ENCODE measurements at regions of chr11 and their contacts with region 1.

Region 1: GRCh38 chr11:59550368-59550841 is 39.1 kb downstream of the OR4D9 start:
- DNase-seq: peak; percentile 82
- H3K4me3 Mint-ChIP-seq: peak overlapping the region; percentile 82
- H3K27ac Mint-ChIP-seq: peak overlapping the region; percentile 93
- H3K4me1 Mint-ChIP-seq: peaks cover 38% of the 10 kb centered on the region
- H3K27me3 Mint-ChIP-seq: peaks cover 19% of the 10 kb centered on the region

Region 2: GRCh38 chr11:57644748-57645688 is 1905.4 kb before region 1 on chr11:
- intact Hi-C with region 1: loop called (anchors 5 kb)
- DNase-seq: peak; percentile 77
- H3K4me3 Mint-ChIP-seq: no peak overlapping the region
- H3K27ac Mint-ChIP-seq: no peak overlapping the region
- H3K4me1 Mint-ChIP-seq: peaks cover 48% of the 10 kb centered on the region
- H3K27me3 Mint-ChIP-seq: peaks cover 39% of the 10 kb centered on the region

Region 3: DNA sequence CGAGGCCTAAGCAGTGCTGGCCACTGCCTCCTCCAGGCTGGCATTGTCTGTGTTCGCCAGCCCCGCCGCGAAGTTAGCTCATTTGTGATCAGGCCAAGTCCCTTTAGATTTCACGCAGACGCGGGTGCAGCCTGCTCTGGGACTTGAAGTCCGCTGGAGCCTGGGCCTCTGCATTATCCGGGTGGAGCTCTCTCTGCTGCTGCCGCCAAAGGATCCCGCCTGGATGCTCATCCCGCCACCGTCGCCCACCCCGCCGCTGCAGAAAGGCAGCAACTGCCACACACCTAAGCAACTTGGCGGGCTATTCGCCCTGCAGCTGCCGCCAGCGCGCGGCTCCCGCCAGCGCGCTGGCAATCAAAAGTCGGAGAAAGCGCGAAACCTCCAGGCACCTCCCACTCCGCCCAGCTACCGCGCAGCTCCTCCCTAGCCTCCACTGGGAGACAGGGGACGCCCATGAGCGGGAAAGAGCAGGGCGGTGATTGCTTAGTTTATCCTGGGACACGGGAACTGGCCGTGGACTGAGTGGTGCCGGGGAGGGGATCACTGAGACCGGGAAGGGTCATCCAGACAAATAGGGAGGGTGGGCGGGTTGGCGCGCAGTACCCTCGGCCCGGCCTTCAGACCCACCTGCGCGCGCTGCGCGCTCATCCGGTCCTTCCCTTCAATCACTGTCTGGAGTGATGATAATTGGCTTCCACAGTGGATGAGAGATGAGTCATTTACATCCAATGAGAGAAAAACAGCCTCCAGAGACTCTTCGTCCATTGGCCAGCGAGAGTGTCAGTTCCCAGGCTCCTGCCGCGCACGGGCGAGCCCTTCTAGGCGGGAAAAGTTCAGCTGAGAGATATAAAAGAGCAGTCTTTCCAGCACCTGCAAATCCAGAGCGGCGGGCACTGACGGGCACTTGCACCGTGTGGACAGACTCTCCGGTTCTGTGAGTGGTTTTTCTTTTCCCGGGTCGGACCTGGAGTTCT is 443.8 kb before region 1 on chr11 and contains the start of gene FAM111B:
- intact Hi-C with region 1: loop called (anchors 10 kb)
- DNase-seq: peak; percentile 73
- H3K4me3 Mint-ChIP-seq: peak within 1 kb of the TSS; percentile 93
- H3K27ac Mint-ChIP-seq: peak within 1 kb of the TSS; percentile 82
- H3K4me1 Mint-ChIP-seq: peaks cover 80% of the 10 kb centered on the region
- H3K27me3 Mint-ChIP-seq: no peaks in the 10 kb centered on the region
- total RNA-seq, gene FAM111B: 54.9 and 57.3 TPM in 2 replicates

Region 4: GRCh38 chr11:59142530-59143507 is 407.6 kb before region 1 on chr11 and contains the start of gene FAM111A:
- intact Hi-C with region 1: loop called (anchors 1 kb)
- DNase-seq: peak; percentile 88
- H3K4me3 Mint-ChIP-seq: peak within 1 kb of the TSS; percentile 91
- H3K27ac Mint-ChIP-seq: peak within 1 kb of the TSS; percentile 93
- H3K4me1 Mint-ChIP-seq: peaks cover 62% of the 10 kb centered on the region
- H3K27me3 Mint-ChIP-seq: no peaks in the 10 kb centered on the region
- total RNA-seq, gene FAM111A: 64.8 and 66.4 TPM in 2 replicates

Region 5: DNA sequence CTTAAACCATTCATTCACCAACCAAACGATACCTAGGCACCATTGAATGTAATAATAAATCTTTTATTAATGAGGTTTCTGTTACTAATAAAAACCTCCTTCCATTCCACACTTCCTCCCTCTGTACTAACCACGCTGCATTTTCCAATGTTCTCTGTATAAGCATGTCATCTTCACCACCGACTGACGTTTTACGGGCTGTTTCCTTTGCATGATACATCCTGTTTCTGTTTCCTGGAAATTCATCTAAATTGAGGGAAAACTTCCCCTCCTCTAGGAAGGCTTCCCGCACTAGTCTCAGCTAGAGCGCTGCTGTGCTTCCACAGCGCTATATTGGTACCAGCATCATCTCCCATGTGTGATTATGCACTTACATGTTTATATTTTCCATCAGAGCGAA is 75.2 kb before region 1 on chr11:
- intact Hi-C with region 1: no loop called
- DNase-seq: no peak
- H3K4me3 Mint-ChIP-seq: no peak overlapping the region
- H3K27ac Mint-ChIP-seq: no peak overlapping the region
- H3K4me1 Mint-ChIP-seq: no peaks in the 10 kb centered on the region
- H3K27me3 Mint-ChIP-seq: no peaks in the 10 kb centered on the region

Region 6: GRCh38 chr11:59560702-59561469 is 10.5 kb after region 1 on chr11:
- intact Hi-C with region 1: loop called (anchors 1 kb)
- DNase-seq: peak; percentile 54
- H3K4me3 Mint-ChIP-seq: peak overlapping the region; percentile 92
- H3K27ac Mint-ChIP-seq: peak overlapping the region; percentile 98
- H3K4me1 Mint-ChIP-seq: peaks cover 48% of the 10 kb centered on the region
- H3K27me3 Mint-ChIP-seq: peaks cover 10% of the 10 kb centered on the region

Region 7: GRCh38 chr11:59753650-59754493 is 203.5 kb after region 1 on chr11:
- intact Hi-C with region 1: no loop called
- DNase-seq: peak; percentile 77
- H3K4me3 Mint-ChIP-seq: peak overlapping the region; percentile 95
- H3K27ac Mint-ChIP-seq: peak overlapping the region; percentile 82
- H3K4me1 Mint-ChIP-seq: peaks cover 36% of the 10 kb centered on the region
- H3K27me3 Mint-ChIP-seq: peaks cover 7% of the 10 kb centered on the region

Region 8: DNA sequence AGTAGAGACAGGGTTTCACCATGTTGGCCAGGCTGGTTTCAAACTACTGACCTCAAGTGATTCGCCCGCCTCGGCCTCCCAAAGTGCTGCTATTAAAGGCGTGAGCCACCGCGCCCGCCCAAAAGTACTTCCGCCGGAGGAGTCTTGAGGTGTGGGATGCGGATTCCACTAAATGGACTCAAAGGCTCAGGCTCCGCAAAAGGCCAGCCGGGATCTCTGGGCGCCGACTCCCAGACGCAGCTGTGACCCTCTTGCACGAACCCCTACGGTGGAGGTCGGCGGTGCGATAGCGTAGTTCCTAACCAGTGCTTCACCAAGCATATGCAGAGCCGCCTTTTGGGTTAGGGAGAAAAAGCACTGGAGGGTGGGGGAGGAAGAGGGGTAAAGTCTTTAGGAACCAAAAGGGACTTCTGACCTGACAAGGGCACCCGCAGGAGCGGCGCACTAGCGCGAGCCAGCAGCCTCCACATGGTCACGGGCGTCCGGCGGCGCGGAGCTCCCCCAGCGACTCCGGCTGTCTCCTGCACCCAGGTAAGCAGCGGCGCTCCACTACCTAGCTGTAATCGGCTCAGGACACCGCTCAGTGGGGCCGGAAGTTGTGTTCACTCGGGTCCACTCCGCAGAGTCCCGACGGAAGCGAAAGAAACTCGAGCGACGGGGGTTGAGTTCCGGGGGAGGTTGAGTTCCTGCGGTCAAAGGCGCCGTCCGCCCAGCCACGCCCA is 259.9 kb after region 1 on chr11 and contains the start of gene MRPL16:
- intact Hi-C with region 1: loop called (anchors 2 kb)
- DNase-seq: peak; percentile 82
- H3K4me3 Mint-ChIP-seq: peak within 1 kb of the TSS; percentile 96
- H3K27ac Mint-ChIP-seq: peak within 1 kb of the TSS; percentile 91
- H3K4me1 Mint-ChIP-seq: peaks cover 28% of the 10 kb centered on the region
- H3K27me3 Mint-ChIP-seq: no peaks in the 10 kb centered on the region
- total RNA-seq, gene MRPL16: 88.3 and 93.9 TPM in 2 replicates

Measured in activated T-helper 1 cell treated with anti-CD3 and anti-CD28 coated beads, Interleukin-12 subunit alpha, Interleukin-12 subunit beta, Interleukin-2, Interleukin-4 antibody, amounts not matched to agents 30 ng/mL and 10 ng/mL and 1 ng/mL, durations not matched to agents 14 hours and 24 hours and 36 hours (primary cell).